IMR-90 (cell line): ENCODE measurements at regions of chr10 and their contacts with region 1.

Region 1: DNA sequence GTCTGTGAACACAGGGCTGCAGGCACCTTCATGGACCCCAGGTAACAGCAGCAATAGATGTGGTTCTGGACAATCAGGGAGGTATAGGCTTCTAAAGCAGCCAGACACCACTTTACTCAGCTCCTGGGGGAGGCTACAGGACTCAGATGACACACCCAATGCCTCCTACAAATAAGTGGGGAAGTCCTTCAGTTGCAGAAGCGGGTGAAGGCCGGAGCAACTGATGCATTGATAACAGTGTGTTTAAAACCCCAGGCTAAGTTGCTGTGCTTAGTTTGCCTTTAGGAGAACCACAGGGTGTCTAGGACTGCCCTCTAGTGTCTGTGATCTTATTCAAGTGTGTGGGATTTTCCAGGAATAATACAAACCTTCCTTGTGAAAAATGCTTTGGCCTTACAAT is 5.9 kb upstream of the ITGA8 start:
- DNase-seq: peak; percentile 67
- ATAC-seq: peak; percentile 90
- H3K4me3 ChIP-seq: no peak overlapping the region
- H3K27ac ChIP-seq: no peak overlapping the region
- H3K4me1 ChIP-seq: no peaks in the 10 kb centered on the region
- H3K27me3 ChIP-seq: peaks cover 21% of the 10 kb centered on the region
- CTCF ChIP-seq: peak; percentile 76
- POLR2A ChIP-seq: no peak
- RAD21 ChIP-seq: peak; percentile 69

Region 2: GRCh38 chr10:15751038-15751797 is 25.6 kb after region 1 on chr10:
- CTCF ChIA-PET with region 1: no interaction called
- POLR2A ChIA-PET with region 1: no interaction called
- dilution Hi-C with region 1: no loop called
- in situ Hi-C with region 1: no loop called
- intact Hi-C with region 1: no loop called
- DNase-seq: no peak
- ATAC-seq: no peak
- H3K4me3 ChIP-seq: no peak overlapping the region
- H3K27ac ChIP-seq: no peak overlapping the region
- H3K4me1 ChIP-seq: no peaks in the 10 kb centered on the region
- H3K27me3 ChIP-seq: peaks cover 18% of the 10 kb centered on the region
- CTCF ChIP-seq: no peak
- POLR2A ChIP-seq: no peak
- RAD21 ChIP-seq: no peak

Region 3: GRCh38 chr10:15780353-15781135 is 54.9 kb after region 1 on chr10:
- CTCF ChIA-PET with region 1: no interaction called
- POLR2A ChIA-PET with region 1: no interaction called
- dilution Hi-C with region 1: no loop called
- in situ Hi-C with region 1: no loop called
- intact Hi-C with region 1: no loop called
- DNase-seq: peak; percentile 25
- ATAC-seq: 0 out of 2 replicates have a peak, but pooled peaks have one; percentile 35
- H3K4me3 ChIP-seq: no peak overlapping the region
- H3K27ac ChIP-seq: no peak overlapping the region
- H3K4me1 ChIP-seq: no peaks in the 10 kb centered on the region; the same call in 1 of the 2 replicates
- H3K27me3 ChIP-seq: no peaks in the 10 kb centered on the region
- CTCF ChIP-seq: no peak
- POLR2A ChIP-seq: no peak
- RAD21 ChIP-seq: no peak

Region 4: GRCh38 chr10:15824498-15824897 is 98.9 kb after region 1 on chr10:
- CTCF ChIA-PET with region 1: no interaction called
- POLR2A ChIA-PET with region 1: no interaction called
- dilution Hi-C with region 1: no loop called
- in situ Hi-C with region 1: loop called (anchors 10 kb)
- intact Hi-C with region 1: loop called (anchors 2 kb)
- DNase-seq: peak; percentile 44
- ATAC-seq: peak; percentile 79
- H3K4me3 ChIP-seq: no peak overlapping the region
- H3K27ac ChIP-seq: no peak overlapping the region
- H3K4me1 ChIP-seq: no peaks in the 10 kb centered on the region
- H3K27me3 ChIP-seq: no peaks in the 10 kb centered on the region
- CTCF ChIP-seq: peak; percentile 56
- POLR2A ChIP-seq: no peak
- RAD21 ChIP-seq: peak; percentile 54